ENCODE measurements at regions of chr13 and their contacts with region 1.

Region 1: DNA sequence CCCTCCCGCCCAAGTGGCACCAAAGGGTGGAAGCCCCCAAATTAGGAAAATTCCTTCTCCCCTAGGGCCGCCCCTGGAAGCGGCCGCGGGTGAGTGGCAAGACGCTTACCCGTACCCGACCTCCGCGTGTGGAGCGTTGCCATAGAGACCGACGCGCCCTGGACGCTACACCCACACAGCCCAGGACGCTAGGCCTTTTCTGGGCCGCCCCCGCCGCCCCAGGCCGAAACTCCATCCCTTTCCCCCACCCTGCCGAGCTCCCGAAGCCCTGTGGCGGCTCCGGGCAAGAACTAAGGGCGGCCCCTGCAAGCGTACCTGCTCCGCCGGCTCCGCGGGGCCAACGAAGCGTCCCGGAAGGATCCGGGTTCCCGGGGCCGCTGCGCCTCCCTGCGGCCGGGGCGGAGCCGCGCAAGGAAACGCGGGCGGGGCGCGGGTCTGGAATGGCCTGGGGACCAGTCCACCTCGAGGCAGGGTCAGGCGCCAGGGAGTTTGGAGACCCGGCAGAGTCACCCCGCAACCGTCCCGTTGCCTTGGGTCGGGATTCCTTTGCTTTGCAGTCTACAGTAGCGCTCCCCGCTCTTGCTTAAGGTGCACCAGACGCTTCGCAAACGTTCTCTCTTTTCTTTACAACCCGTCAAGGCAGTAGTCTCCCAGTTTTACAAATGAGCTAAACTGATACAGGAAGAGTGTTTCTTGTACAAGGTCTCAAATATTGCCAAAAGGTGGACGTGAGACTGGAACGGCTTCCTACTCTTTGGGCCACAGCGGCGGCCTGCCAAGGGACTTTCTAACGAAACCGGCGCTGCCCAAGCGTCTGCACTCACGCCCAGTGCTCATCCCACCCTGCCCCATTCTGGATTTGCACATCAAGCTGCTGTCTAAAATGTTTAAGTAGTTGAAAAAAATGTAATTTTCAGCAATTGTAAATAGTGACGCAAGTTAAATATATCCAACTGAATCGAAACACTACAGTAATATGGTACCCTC is at the start of gene NEK5:
- DNase-seq: peak; percentile 69
- H3K4me3 ChIP-seq: peak within 1 kb of the TSS; percentile 54 to 69 (median 68)
- H3K27ac ChIP-seq: no peak within 1 kb of the TSS
- H3K4me1 ChIP-seq: peaks cover 8% of the 10 kb centered on the region
- H3K27me3 ChIP-seq: no peaks in the 10 kb centered on the region
- CTCF ChIP-seq: peak; percentile 66 to 79
- POLR2A ChIP-seq: no peak
- total RNA-seq, gene NEK5: 0.16 and 0.18 TPM in 2 replicates

Region 2: DNA sequence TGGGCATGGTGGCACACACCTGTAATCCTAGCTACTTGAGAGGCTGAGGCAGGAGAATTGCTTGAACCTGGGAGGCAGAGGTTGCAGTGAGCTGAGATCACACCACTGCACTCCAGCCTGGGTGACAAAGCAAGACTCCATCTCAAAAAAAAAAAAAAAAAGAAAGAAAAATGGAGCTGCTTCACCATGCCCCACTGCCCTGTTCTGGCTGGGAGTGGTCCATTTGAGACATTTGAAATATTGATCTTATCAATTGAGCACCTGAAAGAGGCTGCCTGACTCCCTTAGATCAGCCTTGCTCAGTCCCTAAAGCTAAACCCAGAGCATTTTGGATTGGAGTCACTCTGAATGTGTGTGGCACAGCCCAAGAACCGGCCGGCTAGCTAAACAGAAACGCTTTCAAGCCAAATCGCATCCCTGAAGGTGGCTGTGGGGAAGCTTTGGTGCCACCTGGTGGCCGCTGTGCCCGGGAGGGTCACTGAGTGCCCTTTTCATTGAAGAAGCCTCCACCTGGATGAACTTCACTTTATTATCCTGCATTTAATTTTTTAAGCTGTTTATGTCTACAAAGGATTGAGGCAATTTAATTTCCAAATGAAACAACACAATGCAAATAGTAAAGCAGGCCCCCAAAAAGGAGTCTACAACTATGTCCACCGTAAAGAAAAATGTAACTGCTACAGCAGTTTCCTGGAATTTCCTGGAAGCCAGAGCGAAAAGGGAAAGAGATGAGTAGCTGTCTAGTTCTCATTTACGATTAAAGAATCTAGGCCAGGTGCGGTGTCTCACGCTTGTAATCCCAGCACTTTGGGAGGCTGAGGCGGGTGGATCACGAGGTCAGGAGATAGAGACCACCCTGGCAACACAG is 842.6 kb before region 1 on chr13:
- CTCF ChIA-PET with region 1: interaction called, 12 read pairs
- POLR2A ChIA-PET with region 1: no interaction called
- dilution Hi-C with region 1: no loop called
- intact Hi-C with region 1: loop called (anchors 10 kb)
- DNase-seq: peak; percentile 73
- H3K4me3 ChIP-seq: no peak overlapping the region
- H3K27ac ChIP-seq: no peak overlapping the region
- H3K4me1 ChIP-seq: no peaks in the 10 kb centered on the region
- H3K27me3 ChIP-seq: peaks cover 0 to 3% of the 10 kb centered on the region in 2 experiments
- CTCF ChIP-seq: peak; percentile 87 to 92
- POLR2A ChIP-seq: no peak

Region 3: DNA sequence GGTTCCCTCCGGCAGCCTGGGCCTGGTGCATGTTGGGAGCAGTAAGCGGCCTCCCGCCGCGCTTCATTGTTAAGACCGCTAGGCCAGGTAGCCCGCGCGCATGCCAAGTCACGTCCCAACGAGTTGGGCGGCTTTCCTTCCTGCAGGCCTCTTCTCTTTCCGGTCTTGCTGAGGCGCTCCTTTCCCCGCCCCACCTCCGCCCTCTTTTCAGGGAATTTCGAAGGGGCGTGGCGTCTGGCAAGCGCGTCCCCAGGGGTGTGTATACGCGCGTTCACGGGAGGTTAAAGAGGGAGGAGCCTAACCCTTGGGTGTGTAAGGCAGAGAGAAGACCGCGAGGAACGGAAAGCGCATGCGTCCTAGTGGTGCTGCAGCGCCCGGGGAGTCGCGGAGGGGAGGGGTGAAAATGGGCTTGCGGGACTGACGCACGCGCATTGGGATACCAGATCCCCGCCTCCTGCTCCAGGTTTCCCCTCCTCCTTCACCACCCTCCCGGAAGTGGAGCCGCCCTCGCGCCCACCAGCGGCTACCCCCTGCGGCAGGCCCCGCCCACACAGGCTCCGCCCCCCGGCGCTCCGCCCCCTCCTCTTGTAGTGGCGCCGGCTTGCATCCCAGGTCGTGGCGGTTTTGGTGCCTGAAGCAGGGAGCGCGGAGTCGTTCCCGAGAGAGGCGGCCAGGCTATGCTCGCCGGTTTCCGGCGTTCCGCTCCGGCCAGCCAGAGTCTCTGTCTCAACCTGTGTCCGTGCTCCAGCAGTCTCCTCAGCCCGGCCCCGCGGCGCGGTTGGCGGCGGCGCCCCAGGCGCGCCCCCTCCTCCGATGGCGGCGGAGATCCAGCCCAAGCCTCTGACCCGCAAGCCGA is 544.9 kb before region 1 on chr13 and contains the start of gene WDFY2:
- CTCF ChIA-PET with region 1: no interaction called
- POLR2A ChIA-PET with region 1: no interaction called
- dilution Hi-C with region 1: no loop called
- intact Hi-C with region 1: loop called (anchors 10 kb)
- DNase-seq: peak; percentile 100
- H3K4me3 ChIP-seq: peak within 1 kb of the TSS; percentile 80 to 90 (median 85)
- H3K27ac ChIP-seq: peak within 1 kb of the TSS; percentile 52
- H3K4me1 ChIP-seq: peaks cover 14% of the 10 kb centered on the region
- H3K27me3 ChIP-seq: no peaks in the 10 kb centered on the region
- CTCF ChIP-seq: peak in 1 of 2 donors; percentile 17
- POLR2A ChIP-seq: no peak
- total RNA-seq, gene WDFY2: 5.5 TPM in 2 replicates

Region 4: DNA sequence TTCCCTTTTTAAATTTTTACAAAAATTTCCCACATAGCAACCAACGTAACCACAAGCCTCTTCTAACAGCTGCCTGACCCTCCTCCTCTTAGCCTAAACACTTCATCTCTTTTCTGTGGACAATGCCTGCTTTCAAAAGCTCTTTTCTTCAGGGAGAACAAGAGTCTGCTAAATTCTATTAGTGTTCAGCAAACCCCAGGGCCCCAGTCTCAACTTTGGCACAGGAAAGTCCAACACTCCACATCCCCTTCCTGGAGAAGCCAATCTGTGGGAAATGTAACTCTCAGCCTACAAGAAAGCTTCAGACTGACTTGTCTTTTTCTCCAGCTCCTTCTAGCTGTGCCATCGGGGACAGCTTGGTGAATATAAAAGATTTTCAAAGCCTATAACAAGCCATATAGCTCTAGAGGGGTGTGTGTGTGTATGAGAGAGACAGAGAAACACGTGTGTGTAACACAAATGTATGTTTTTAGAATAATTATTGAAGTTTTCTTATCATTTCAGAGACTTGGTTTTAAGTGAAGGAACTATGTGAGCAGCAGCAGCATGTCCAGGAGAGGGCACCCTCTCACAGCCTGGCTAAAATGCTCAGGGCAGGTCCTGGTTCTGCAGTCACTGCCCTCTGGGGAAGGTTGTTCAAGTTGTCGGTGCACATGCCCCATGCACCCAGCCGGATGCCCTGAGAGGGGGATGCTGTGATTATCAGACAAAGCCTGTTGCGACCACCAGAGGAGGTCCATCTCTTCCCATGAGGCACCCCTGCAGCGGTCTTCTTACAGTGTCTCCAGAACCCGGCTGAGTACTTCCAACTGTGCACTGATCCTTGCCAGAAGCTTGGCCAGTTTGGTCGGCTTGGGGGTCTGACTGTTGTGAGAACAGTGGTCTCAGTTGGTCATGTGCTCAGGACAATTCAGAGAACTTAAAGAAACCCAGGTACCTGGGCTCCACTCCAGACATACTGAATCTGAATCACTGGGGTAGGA is 232.8 kb before region 1 on chr13:
- CTCF ChIA-PET with region 1: interaction called, 112 read pairs
- POLR2A ChIA-PET with region 1: no interaction called
- dilution Hi-C with region 1: no loop called
- intact Hi-C with region 1: loop called (anchors 1 kb)
- DNase-seq: peak; percentile 63
- H3K4me3 ChIP-seq: no peak overlapping the region
- H3K27ac ChIP-seq: no peak overlapping the region
- H3K4me1 ChIP-seq: no peaks in the 10 kb centered on the region
- H3K27me3 ChIP-seq: peaks cover 13 to 23% of the 10 kb centered on the region in 2 experiments
- CTCF ChIP-seq: peak; percentile 59 to 77
- POLR2A ChIP-seq: no peak

Region 5: DNA sequence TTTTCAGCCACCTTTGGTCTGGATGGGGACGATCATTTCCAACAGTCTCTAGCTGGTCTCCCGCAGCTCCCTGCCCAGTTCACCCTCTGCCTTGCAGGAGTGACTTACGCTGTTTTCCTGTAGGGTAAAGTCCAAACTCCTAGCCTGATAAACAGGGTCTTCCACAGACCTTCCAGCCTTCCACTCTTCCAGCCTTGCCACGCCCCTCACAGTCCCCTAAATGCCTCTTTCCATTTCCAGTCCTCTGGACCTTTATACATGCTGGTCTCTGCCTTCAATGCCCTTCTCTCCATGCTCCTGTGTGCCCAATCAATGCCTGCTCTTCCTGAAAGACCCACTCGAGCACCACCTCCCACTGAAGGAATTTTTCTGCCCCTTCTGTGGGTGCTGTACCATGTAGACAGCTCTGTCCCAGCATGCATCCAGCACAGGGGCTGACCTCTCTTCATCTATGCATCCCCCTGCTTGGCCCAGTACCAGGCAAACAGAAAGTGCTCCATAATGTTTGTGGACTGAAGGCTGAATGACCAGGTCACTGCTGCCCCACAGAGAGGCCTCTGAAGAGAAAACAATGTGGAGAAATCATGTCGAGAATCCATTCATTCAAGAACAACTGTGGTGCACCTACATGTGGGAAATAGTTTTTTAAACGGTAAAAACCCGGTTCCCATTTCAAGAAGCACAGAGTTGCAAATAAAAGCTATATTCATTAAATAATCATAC is 122.3 kb before region 1 on chr13:
- CTCF ChIA-PET with region 1: interaction called, 45 read pairs
- POLR2A ChIA-PET with region 1: no interaction called
- dilution Hi-C with region 1: no loop called
- intact Hi-C with region 1: loop called (anchors 1 kb)
- DNase-seq: no peak
- H3K4me3 ChIP-seq: no peak overlapping the region
- H3K27ac ChIP-seq: no peak overlapping the region
- H3K4me1 ChIP-seq: peaks cover 5% of the 10 kb centered on the region
- H3K27me3 ChIP-seq: peaks cover 13 to 14% of the 10 kb centered on the region in 2 experiments
- CTCF ChIP-seq: no peak
- POLR2A ChIP-seq: no peak

Region 6: DNA sequence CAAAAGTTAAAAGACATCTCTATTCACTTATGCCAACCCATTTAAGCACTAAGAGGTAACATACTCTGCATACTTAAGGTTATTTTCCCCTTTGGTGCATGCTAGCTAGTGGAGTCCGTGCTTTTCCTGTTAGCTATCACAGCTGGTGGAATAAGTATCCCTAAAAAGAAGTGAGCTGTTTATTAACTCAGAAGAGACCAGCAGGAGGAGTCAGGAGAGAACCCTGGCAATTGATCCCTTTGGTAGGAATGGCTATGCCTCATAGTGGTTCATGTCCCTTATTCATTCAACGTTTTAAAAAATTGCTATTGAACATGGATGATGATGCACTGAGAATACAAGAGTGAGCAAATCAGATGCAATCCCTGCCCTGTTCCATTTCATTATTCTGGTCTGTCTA is 12.3 kb after region 1 on chr13:
- CTCF ChIA-PET with region 1: interaction called, 10 read pairs
- POLR2A ChIA-PET with region 1: no interaction called
- dilution Hi-C with region 1: no loop called
- intact Hi-C with region 1: no loop called
- DNase-seq: no peak
- H3K4me3 ChIP-seq: no peak overlapping the region
- H3K27ac ChIP-seq: no peak overlapping the region
- H3K4me1 ChIP-seq: no peaks in the 10 kb centered on the region
- H3K27me3 ChIP-seq: no peaks in the 10 kb centered on the region
- CTCF ChIP-seq: no peak
- POLR2A ChIP-seq: no peak

Region 7: DNA sequence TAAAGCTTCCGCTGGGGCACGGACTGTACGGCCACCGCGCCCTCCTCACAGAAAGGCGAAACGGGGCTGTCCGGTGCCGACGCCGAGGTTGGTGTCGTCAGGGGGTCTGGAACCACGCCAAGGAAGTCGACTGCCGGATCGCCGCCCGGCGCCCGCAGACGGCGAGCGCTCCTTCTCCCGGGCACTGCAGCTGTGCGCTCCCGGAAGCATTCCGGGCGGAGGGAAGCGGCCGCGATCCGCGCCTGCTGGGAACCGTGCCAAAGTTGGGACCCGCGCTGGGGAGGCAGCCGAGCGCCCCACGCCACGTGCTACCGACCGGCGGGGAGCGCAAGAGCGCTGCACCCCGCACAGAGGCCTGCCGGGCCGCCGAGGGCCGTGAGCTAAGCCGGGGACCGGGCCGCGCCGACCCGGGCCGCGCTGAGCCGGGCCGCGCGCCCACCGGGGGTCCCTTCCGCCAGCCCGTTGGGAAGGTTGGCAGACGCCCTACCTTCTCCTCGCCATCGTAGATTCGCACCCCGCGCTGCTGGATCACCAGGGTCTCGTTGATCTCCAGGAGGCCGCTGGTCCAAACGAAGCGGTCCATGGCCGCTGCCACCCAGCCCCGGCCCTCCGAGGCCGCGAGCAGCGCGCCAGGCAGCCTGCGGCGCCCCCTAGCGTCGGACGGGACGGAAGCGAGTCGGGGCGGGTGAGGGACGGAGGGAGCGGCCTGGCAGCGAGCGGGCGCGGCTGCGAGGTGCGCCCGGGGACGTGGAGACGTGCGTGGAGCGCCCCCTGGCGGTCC is 321.2 kb after region 1 on chr13 and contains the start of gene VPS36:
- CTCF ChIA-PET with region 1: interaction called, 8 read pairs
- POLR2A ChIA-PET with region 1: no interaction called
- dilution Hi-C with region 1: no loop called
- intact Hi-C with region 1: loop called (anchors 1 kb)
- DNase-seq: peak; percentile 93
- H3K4me3 ChIP-seq: peak within 1 kb of the TSS; percentile 74 to 99 (median 98)
- H3K27ac ChIP-seq: peak within 1 kb of the TSS; percentile 94
- H3K4me1 ChIP-seq: peaks cover 27% of the 10 kb centered on the region
- H3K27me3 ChIP-seq: no peaks in the 10 kb centered on the region
- CTCF ChIP-seq: peak; percentile 95 to 100
- POLR2A ChIP-seq: peak; percentile 61
- total RNA-seq, gene VPS36: 30.4 and 32.3 TPM in 2 replicates